ENCODE measurements at regions of chr2 and their contacts with region 1.

Region 1: DNA sequence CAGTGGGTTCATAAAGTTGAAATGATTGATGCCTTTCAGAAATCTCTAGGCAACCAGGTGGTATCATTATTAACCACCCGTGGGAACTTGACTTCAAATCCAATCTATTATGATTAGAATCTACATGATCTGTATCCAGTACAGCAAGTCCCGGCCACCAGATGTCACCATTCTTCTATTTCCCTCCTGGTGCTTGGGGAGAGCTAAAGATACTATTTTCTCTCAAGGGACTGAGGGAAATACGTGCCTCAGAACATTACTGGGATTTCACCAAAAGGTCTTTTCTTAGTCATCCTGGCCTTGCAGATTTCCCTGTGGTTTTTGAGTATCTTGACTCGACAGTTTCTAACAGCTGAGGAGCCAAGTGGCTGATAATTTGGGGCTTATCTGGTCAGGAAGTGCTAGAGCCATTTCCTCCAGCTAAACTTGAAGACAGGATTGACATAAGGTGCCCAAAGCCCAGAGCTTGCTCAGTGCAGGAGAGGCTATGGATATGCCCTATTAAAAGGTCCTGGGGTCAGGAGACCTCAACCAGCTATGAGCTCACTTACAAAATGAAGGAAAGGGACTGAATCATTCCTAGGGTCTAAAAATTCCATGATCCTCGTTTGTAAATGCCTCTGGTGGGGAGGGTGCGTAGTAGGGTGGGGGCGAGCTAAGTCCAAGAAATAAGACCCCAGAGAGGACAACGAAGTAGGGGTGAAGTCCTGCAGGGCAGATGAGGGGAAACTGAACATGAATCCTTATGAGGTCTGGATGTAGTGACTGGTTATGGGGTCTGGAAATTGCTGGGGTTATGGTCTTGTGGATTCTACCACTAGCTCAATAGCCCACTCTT is 135.4 kb upstream of the MGAT5 start:
- DNase-seq: peak; percentile 55 to 92 (median 80)
- ATAC-seq: peak; percentile 34 to 38
- H3K4me3 Mint-ChIP-seq: peak overlapping the region; percentile 96 to 100 (median 99)
- H3K27ac Mint-ChIP-seq: peak overlapping the region in 7 of 10 donors; percentile 11 to 95 (median 25)
- H3K4me1 Mint-ChIP-seq: peaks cover 23 to 40% (median 36%) of the 10 kb centered on the region in 4 donors
- H3K27me3 Mint-ChIP-seq: peaks cover 0 to 4% (median 0%) of the 10 kb centered on the region in 5 donors

Region 2: GRCh38 chr2:134021830-134022524 is 96.5 kb before region 1 on chr2:
- POLR2A ChIA-PET with region 1: no interaction called
- DNase-seq: no peak
- ATAC-seq: no peak
- H3K4me3 Mint-ChIP-seq: no peak overlapping the region
- H3K27ac Mint-ChIP-seq: no peak overlapping the region
- H3K4me1 Mint-ChIP-seq: peaks cover 6 to 26% (median 13%) of the 10 kb centered on the region in 4 donors
- H3K27me3 Mint-ChIP-seq: peaks cover 20 to 36% (median 22%) of the 10 kb centered on the region in 5 donors

Region 3: GRCh38 chr2:134181210-134181609 is 62.7 kb after region 1 on chr2:
- POLR2A ChIA-PET with region 1: interaction called, 29 read pairs
- DNase-seq: peak; percentile 10 to 81 (median 58)
- ATAC-seq: peak; percentile 87
- H3K4me3 Mint-ChIP-seq: peak overlapping the region; percentile 30 to 78 (median 62)
- H3K27ac Mint-ChIP-seq: peak overlapping the region; percentile 91 to 99 (median 95)
- H3K4me1 Mint-ChIP-seq: peaks cover 47 to 97% (median 95%) of the 10 kb centered on the region in 4 donors
- H3K27me3 Mint-ChIP-seq: no peaks in the 10 kb centered on the region

Region 4: DNA sequence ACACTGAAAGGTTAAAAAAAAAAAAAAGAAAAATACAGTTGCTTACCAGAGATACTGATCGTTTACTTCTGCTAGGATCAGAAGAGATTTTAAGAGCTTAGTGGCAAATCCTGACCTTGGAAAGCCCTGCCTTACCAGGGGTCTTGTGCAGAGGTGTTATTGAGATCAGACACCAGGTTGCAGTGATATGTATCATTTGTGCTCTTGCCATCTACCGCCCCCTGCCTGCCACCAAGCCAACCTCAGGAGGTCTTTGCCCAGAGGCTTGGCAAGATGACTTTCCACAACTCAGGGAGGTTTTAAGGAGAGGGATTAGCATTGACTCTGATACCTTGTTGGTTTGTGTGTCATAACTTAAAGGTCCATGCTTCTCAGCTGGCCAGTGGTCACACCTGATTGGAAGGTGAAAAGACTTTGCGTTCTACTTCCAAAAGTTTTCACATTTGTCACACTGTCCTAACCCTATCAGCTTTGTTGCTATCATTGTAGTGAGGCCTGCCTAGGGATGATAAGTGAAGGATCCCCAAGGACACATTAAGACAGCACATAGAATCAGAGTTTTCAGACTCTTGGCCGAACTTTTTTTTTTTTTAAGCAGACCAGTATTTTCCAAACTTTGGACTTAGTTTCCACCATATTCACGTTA is 89.2 kb after region 1 on chr2:
- POLR2A ChIA-PET with region 1: interaction called, 29 read pairs
- DNase-seq: peak; percentile 40 to 77 (median 55)
- ATAC-seq: peak; percentile 93 to 98
- H3K4me3 Mint-ChIP-seq: no peak overlapping the region
- H3K27ac Mint-ChIP-seq: peak overlapping the region in 6 of 10 donors; percentile 11 to 46 (median 24)
- H3K4me1 Mint-ChIP-seq: peaks cover 3 to 24% (median 13%) of the 10 kb centered on the region in 4 donors
- H3K27me3 Mint-ChIP-seq: no peaks in the 10 kb centered on the region

Region 5: DNA sequence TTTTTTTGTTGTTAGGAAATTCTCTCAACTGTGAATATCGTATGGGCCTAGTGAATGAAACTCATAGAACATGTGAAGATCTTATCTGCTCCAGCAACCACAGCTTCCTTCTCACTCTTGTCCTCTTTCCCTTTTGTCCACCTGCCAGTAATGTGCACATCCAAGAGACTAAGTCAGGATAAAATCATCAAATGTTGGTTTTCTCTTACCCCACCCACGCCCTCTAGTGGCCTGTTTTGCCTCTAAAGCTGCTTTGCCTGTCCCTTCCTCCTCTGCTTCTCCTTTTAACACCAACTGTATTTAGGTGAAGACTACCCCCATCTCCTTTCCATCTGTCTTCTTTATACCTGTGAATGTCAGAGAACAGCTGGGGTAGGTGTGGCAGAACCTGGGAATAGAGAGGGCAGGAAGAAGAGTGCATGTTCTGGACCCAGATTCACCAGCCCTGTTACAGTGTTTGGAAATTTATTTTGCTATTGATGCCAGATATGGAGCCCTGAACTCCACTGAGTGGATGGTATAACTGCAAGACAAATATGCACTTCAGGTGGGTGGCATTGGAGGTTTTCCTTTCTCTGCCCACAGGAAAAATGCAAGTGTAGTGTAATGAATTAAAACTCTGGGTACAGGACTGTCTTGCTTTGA is 127.0 kb after region 1 on chr2:
- POLR2A ChIA-PET with region 1: interaction called, 25 read pairs
- DNase-seq: peak; percentile 45 to 87 (median 67)
- ATAC-seq: peak; percentile 55 to 65
- H3K4me3 Mint-ChIP-seq: peak overlapping the region in 8 of 10 donors; percentile 0 to 75 (median 54)
- H3K27ac Mint-ChIP-seq: peak overlapping the region in 9 of 10 donors; percentile 1 to 86 (median 17)
- H3K4me1 Mint-ChIP-seq: peaks cover 43 to 93% (median 75%) of the 10 kb centered on the region in 4 donors
- H3K27me3 Mint-ChIP-seq: no peaks in the 10 kb centered on the region

Region 6: DNA sequence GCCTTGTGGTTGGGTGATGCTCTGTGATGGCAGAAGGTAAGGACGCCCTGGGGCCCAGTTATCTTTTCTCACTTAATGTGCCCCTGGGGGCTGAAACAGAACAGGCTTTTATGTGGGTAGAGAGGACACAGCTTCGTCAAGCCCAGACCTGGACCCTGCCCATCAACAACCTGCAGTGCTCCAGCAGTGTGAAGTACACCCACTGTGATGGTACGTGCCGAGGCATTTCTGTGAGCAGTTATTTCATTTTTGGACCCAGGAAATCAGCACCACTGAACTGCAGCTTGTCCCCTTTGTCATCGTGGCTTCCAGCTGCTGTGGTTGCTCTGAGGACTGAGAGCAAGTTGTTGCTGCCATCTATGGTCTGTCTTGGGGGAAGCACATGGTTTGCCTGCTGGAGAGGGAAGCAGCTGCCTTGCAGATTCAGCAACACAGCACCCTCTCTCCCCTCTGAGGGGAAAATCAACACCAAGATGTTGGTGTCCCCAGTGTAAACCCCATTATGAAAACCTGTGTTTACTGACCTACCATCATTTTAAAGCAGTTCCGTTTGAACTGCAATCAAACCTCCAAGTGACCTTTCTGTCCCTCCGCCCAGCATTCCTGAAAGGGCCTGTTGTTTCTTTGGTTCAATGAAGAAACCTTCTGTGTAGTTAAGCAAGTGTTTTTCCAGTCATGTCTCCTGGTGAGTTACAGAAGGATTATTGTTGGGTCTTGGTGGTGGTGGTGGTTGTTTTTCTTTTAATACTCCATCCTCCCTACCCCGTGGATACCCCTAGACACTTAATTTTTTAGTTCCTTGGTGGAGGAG is 293.5 kb after region 1 on chr2:
- POLR2A ChIA-PET with region 1: interaction called, 13 read pairs
- DNase-seq: peak; percentile 35 to 84 (median 68)
- ATAC-seq: peak; percentile 98 to 99
- H3K4me3 Mint-ChIP-seq: peak overlapping the region in 1 of 10 donors; percentile 39
- H3K27ac Mint-ChIP-seq: peak overlapping the region in 9 of 10 donors; percentile 5 to 75 (median 43)
- H3K4me1 Mint-ChIP-seq: peaks cover 12 to 52% (median 32%) of the 10 kb centered on the region in 4 donors
- H3K27me3 Mint-ChIP-seq: no peaks in the 10 kb centered on the region